ENCODE measurements at regions of chr17 and their contacts with region 1.

Region 1: GRCh38 chr17:1509290-1509881 is 7.0 kb downstream of the INPP5K start:
- DNase-seq: no peak

Region 2: DNA sequence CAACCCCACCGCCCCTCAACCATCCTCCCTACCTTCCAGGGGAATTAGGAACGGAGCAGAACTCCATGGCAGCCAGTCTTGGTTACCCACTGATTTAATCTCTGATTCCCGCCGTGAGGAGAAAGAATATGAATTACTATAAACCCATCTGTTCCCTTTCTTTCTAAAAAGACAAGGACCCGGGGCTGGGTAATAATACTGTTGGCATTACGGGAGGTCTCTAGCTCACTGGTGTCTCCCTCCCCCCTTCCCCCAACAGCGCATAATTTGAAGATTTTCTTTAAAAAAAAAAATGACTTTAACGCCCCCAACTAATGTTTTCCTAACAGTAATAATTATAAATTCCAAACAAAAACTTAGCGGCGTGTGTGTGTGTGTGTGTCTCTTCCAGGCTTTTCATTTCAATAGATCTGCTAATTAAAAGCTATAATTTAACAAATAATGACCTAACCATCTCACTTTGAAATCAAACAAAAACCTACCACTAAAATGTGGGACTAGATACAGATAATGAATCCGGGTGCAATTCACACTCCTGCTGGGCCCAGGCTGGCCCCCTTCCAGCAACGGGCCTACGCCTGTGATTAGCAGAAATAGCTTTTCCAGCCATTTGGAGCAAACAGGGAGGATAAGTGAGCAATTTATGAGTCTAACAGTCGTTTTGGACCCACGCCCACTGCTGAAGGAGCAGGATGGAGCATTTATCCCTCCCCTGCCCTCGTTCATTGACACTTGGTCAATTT is 257.3 kb before region 1 on chr17:
- in situ Hi-C with region 1: loop called (anchors 10 kb)
- DNase-seq: no peak

Region 3: DNA sequence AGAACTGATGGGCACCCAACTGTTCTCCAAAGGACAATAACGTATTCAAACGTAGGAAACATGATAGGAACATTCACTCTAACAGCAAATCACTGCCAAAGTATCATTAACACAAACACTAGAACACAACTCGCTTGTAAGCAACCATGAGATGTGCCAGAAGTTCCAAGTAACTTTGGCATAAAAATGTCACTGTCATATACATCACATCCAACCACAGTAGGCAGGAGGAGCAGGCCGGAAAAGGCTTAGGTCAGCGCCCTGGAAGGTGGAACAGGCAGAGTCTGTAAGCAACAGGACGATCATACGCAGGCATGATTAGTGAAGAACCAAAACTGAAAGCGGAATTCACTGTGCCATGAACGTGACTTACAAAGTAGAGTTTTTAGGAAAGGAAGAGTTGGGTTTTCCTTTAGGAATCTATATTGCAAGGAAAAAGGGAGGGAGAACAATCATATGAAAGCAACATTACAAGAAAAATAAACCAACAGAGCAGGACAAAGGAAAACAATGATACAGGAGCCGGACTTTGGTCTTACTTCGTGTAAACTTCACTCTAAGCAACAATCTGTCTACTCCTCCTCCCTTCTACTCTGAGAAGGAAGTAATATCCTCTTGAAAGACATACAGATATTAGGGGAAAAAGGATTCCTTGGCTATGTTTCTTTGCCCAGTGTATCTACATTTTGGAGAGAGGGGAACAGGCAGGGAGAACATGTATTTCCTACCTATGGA is 161.6 kb before region 1 on chr17:
- in situ Hi-C with region 1: no loop called
- DNase-seq: peak; percentile 40

Region 4: DNA sequence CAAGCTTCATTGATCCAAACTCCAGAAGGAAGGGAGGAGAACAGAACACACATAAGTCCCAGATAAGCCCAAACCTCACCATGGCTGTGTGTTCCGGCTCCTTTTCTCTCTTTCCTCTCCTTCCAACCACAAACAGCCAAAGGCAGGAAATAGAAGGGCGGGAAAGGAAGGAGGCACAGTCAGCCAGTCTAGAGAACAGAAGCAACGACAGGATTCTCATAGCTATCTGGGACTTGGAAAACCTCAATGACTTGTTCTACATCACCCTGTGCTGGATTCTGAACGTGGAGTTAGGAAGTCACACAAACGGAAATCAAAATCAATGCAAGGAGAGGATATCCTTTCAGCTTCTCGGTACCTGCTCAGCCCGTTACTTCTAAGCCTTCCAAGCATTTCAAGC is 62.3 kb before region 1 on chr17:
- in situ Hi-C with region 1: loop called (anchors 5 kb)
- DNase-seq: no peak

Region 5: GRCh38 chr17:1553354-1554266 is 44.2 kb after region 1 on chr17:
- in situ Hi-C with region 1: loop called (anchors 5 kb)
- DNase-seq: no peak

Region 6: GRCh38 chr17:1592751-1593629 is 83.6 kb after region 1 on chr17:
- in situ Hi-C with region 1: no loop called
- DNase-seq: peak; percentile 67

Measured in G401 (cell line).